ENCODE measurements at regions of chr15 and their contacts with region 1.

Region 1: GRCh38 chr15:67863442-67863987 is 23.7 kb upstream of the RNU6-1 start:
- DNase-seq: peak; percentile 83
- ATAC-seq: peak; percentile 92
- H3K4me3 ChIP-seq: peak overlapping the region in 4 of 5 experiments; percentile 25 to 60 (median 52)
- H3K4me3 Mint-ChIP-seq: peak overlapping the region; percentile 80
- H3K27ac ChIP-seq: no peak overlapping the region
- H3K27ac Mint-ChIP-seq: peak overlapping the region; percentile 90
- H3K4me1 ChIP-seq: peaks cover 14 to 15% of the 10 kb centered on the region in 2 donors
- H3K4me1 Mint-ChIP-seq: peaks cover 14% of the 10 kb centered on the region
- H3K27me3 ChIP-seq: peaks cover 0 to 4% (median 2%) of the 10 kb centered on the region in 4 experiments
- H3K27me3 Mint-ChIP-seq: peaks cover 9% of the 10 kb centered on the region
- CTCF ChIP-seq: peak; percentile 91

Region 2: GRCh38 chr15:67792250-67792942 is 71.1 kb before region 1 on chr15:
- CTCF ChIA-PET with region 1: no interaction called
- POLR2A ChIA-PET with region 1: no interaction called
- intact Hi-C with region 1: no loop called
- DNase-seq: no peak
- ATAC-seq: no peak
- H3K4me3 ChIP-seq: no peak overlapping the region
- H3K4me3 Mint-ChIP-seq: no peak overlapping the region
- H3K27ac ChIP-seq: no peak overlapping the region
- H3K27ac Mint-ChIP-seq: no peak overlapping the region
- H3K4me1 ChIP-seq: peaks cover 0 to 5% of the 10 kb centered on the region in 2 donors
- H3K4me1 Mint-ChIP-seq: peaks cover 5% of the 10 kb centered on the region
- H3K27me3 ChIP-seq: no peaks in the 10 kb centered on the region
- H3K27me3 Mint-ChIP-seq: no peaks in the 10 kb centered on the region
- CTCF ChIP-seq: no peak

Region 3: DNA sequence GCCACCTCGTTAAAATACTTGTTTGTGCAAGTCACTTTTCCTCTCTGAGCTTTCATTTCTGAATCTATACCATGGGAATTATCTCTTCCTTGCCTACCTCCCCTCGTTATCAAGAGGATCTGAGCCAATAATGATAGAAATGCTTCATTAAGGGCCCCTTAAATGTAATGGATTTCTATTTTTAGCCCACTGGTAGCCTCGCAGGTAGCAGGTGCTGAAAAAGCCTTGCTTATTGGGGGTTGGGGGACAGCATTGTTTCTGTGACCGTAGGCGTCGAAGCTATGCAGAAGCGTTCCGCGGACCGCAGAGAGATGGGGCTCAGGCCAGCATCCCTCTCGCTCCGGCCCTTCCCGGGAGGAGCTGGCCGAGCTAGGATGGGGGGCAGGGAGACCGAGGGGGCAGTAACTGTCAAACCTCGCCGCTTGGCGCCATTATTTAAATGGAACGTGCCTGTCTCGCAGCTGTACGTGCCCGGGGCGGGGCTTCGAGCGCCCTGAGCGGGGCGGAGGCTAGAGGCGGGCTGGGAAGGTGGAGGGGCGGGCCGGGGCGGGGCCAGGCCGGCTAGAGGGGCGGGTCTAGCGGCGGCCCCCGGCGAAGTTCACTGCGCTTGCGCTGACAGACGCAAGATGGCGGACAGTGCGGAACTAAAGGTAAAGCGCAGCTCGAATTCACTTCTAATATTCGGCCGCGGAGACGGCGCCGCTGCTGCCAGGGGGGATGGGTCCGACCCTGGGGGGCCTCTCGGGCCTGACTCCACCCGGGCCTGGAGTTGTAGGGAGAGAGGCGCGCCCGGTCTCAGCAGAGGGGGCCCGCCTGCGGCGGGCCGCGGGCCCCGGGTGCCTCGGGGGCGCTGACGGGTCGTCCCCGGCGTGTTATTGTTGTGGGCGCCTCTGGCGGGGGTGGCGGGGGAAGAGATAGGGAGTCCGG is 190.4 kb after region 1 on chr15 and contains the start of gene PIAS1:
- CTCF ChIA-PET with region 1: interaction called, 5 read pairs
- POLR2A ChIA-PET with region 1: interaction called, 3 read pairs
- intact Hi-C with region 1: loop called (anchors 2 kb)
- DNase-seq: peak; percentile 95
- ATAC-seq: peak; percentile 92
- H3K4me3 ChIP-seq: peak within 1 kb of the TSS; percentile 77 to 99 (median 88)
- H3K4me3 Mint-ChIP-seq: peak within 1 kb of the TSS; percentile 93
- H3K27ac ChIP-seq: peak within 1 kb of the TSS; percentile 78 to 92
- H3K27ac Mint-ChIP-seq: peak within 1 kb of the TSS; percentile 96
- H3K4me1 ChIP-seq: peaks cover 11 to 26% of the 10 kb centered on the region in 2 donors
- H3K4me1 Mint-ChIP-seq: peaks cover 40% of the 10 kb centered on the region
- H3K27me3 ChIP-seq: no peaks in the 10 kb centered on the region
- H3K27me3 Mint-ChIP-seq: no peaks in the 10 kb centered on the region
- CTCF ChIP-seq: no peak
- total RNA-seq, gene PIAS1: 87.3 and 97.5 TPM in 2 replicates

Region 4: DNA sequence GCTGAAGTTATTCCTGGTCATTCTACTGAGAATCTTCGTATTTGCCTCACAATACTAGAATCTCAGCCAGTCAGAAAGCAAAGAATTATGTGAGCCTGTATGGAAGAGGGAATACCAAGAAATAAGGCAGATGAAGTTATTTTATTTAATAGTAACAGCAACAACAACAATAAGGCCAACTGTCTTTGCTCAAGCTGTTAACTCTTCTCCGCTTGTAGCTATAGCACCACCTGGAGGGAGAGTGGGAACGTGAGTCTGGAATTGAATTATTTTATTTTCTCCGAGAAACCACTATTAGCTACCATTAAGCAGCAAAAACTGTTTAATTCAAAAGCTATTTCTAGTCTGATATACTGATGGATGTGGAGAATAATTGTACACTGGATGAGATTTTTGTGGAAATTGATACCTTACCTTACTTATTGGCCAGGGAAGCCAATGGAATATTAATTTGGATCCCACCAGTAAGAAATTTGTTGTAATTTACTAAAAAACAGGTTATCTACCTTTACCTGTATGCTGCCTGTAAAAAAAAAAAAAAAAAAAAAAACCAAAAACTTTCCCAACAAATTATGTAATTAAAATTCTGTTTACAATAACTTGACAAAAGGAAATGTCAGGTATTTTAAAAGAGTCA is 291.5 kb after region 1 on chr15:
- CTCF ChIA-PET with region 1: interaction called, 61 read pairs
- POLR2A ChIA-PET with region 1: no interaction called
- intact Hi-C with region 1: loop called (anchors 1 kb)
- DNase-seq: peak; percentile 40
- ATAC-seq: no peak
- H3K4me3 ChIP-seq: no peak overlapping the region
- H3K4me3 Mint-ChIP-seq: no peak overlapping the region
- H3K27ac ChIP-seq: no peak overlapping the region
- H3K27ac Mint-ChIP-seq: no peak overlapping the region
- H3K4me1 ChIP-seq: no peaks in the 10 kb centered on the region
- H3K4me1 Mint-ChIP-seq: no peaks in the 10 kb centered on the region
- H3K27me3 ChIP-seq: no peaks in the 10 kb centered on the region
- H3K27me3 Mint-ChIP-seq: no peaks in the 10 kb centered on the region
- CTCF ChIP-seq: peak; percentile 61

Region 5: GRCh38 chr15:68209735-68210134 is 346.2 kb after region 1 on chr15:
- CTCF ChIA-PET with region 1: interaction called, 7 read pairs
- POLR2A ChIA-PET with region 1: no interaction called
- intact Hi-C with region 1: loop called (anchors 1 kb)
- DNase-seq: peak; percentile 72
- ATAC-seq: peak; percentile 85
- H3K4me3 ChIP-seq: no peak overlapping the region
- H3K4me3 Mint-ChIP-seq: peak overlapping the region; percentile 57
- H3K27ac ChIP-seq: peak overlapping the region in 1 of 2 donors; percentile 1
- H3K27ac Mint-ChIP-seq: peak overlapping the region; percentile 78
- H3K4me1 ChIP-seq: peaks cover 26 to 35% of the 10 kb centered on the region in 2 donors
- H3K4me1 Mint-ChIP-seq: peaks cover 27% of the 10 kb centered on the region
- H3K27me3 ChIP-seq: no peaks in the 10 kb centered on the region
- H3K27me3 Mint-ChIP-seq: no peaks in the 10 kb centered on the region
- CTCF ChIP-seq: no peak

Measured in B cell (primary cell).